ENCODE measurements at regions of chr5 and their contacts with region 1.

Region 1: DNA sequence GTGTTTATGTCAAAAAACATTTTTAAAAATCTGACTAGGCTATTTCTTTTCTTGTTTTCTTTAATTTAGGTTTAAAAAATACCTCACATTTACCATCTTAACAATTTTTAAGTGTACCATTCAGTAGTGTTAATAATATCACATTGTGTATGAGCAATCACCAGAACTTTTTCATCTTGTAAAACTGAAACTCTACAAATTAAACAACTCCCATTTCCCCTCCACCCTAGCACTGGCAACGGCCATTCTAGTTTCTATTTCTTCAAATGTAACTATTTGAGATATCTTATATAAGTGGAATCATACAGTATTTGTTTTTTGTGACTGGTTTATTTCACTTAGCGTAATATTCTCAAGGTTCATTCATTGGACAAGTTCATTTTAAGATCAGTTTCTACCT is 27.7 kb downstream of the PLCXD3 start:
- DNase-seq: no peak

Region 2: DNA sequence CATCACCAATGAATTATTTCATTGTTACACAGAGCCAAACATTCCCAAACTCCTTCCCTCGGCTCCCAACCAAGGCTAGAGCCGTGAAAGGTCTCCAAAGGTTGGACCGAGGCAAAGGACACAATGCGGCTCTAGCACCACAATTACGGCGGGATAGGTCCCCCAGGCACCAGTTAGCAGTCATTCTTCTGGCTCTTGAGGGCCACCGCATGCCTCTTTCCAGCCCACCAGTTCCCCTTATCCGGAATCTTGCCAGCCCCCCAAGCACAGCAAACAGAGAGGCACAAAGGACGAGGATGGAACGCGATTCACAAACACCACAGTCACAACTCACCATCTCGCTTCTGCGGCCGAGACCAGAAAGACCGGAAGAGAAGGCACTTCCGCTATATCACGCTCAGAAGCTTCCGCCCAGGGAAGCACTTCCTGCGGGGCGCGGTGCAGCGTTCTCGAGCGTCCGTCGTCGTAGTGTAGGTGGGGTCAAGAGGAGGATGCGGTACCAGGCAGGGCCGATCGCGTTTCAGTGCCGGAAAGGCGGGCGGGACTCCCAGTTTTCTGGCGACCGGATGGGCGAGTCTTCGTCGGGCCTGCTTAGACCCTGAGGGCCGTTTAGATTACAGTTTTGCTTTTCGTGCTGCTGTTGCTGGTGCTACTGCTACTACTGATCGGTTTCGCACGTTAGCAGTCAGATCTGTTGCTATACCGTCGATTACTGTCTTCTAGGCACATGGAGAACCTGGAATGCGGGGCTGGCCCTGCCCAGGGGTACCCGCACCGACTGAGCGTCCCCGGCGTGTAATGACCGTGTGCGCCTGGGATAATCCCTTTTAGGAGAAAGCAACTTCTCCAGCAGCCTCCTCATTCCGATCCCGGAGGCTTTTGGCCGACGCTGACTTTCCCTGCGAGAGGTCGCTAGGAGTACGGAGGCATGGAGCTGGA is 647.6 kb before region 1 on chr5 and contains the start of gene RPL37:
- intact Hi-C with region 1: no loop called
- DNase-seq: peak; percentile 99
- total RNA-seq, gene RPL37: 738 to 822 TPM

Region 3: GRCh38 chr5:42035526-42035925 is 552.8 kb after region 1 on chr5:
- intact Hi-C with region 1: loop called in 1 of 2 experiments (anchors 10 kb)
- DNase-seq: no peak

Measured in posterior vena cava (tissue), 2 donors.